IMR-90 (cell line): ENCODE measurements at regions of chr2 and their contacts with region 1.

Region 1: DNA sequence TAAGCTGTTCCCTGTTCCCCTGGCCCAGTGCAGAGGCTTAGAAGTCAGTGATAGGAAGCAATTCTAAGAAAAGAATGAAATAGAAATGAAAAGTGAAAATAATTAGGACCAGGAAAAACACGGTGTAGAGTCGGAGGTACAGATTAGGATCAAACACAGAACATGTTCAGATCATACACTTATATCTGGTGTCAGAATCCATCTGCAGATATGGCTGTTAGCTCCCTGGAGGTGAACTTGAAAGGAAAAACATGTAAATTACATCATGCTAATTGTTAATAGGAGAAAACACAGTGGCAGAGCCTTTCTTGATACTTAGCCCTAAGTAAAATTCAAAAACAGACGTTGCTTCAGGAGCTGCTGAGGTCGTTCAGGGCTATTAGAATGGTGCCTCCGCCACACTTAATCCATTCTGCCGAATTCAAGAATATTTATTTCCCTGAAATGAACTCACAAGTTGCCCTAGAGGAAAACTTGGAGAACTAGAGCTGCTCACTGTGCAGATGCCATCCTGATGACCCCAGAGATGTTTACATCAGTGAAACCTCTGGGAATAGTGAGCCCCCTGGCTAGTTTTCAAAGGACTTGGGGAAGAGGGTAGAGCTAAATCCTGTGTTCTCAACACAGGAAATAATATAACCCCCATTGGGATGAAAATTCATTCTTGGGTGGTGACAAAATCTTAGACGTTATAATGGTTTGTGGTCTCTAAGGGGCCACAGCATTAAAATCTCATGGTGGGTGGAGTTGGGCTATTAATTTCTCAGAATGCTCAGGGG is 27.5 kb downstream of the LPIN1 start:
- DNase-seq: no peak
- ATAC-seq: peak; percentile 31
- H3K4me3 ChIP-seq: no peak overlapping the region
- H3K27ac ChIP-seq: no peak overlapping the region
- H3K4me1 ChIP-seq: peaks cover 7% of the 10 kb centered on the region
- H3K27me3 ChIP-seq: no peaks in the 10 kb centered on the region
- CTCF ChIP-seq: no peak
- POLR2A ChIP-seq: no peak
- RAD21 ChIP-seq: no peak

Region 2: GRCh38 chr2:11539317-11540152 is 234.4 kb before region 1 on chr2:
- CTCF ChIA-PET with region 1: no interaction called
- POLR2A ChIA-PET with region 1: no interaction called
- dilution Hi-C with region 1: no loop called
- in situ Hi-C with region 1: no loop called
- intact Hi-C with region 1: no loop called
- DNase-seq: no peak
- ATAC-seq: no peak
- H3K4me3 ChIP-seq: no peak overlapping the region
- H3K27ac ChIP-seq: no peak overlapping the region
- H3K4me1 ChIP-seq: no peaks in the 10 kb centered on the region
- H3K27me3 ChIP-seq: peaks cover 60% of the 10 kb centered on the region
- CTCF ChIP-seq: no peak
- POLR2A ChIP-seq: no peak
- RAD21 ChIP-seq: no peak

Region 3: DNA sequence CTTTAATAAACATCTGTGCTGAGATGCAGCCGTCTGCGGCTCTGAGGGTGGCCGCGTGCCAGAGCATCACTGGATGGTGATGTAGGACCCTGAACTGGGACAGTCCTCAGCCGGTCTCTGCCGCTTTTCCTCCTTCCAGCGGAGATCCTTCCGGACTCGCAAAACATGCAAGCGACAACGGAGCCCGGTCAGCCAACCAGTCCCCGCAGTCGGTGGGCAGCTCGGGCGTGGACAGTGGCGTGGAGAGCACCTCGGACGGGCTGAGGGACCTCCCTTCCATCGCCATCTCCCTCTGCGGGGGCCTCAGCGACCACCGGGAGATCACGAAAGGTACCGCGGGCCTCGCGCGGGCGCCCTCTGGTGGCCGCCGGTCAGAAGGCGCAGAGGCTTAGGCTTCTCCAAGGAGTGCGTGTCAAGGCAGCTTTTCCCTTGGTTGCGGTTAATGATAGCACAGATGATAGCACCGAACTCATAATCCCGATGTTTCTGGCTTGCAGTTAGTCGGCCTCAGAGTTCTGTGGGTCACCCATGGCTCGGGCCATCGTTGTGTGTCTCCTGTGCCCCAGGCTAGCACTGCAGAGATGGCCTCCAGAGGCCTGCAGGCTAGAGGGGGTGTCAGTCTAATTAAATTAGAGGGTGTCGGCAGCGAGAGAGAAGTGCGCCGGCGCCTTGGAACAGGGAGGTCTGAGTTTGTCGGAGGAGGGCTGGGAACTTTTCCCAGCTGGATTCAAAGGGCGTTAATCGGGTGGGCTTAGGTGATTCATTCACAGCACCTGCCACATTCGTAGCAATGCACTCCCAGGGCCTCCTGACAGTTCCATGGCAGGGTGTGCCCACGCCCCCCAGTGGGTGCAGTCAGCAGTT is 11.0 kb after region 1 on chr2:
- CTCF ChIA-PET with region 1: interaction called, 7 read pairs
- POLR2A ChIA-PET with region 1: interaction called, 15 read pairs
- dilution Hi-C with region 1: no loop called
- in situ Hi-C with region 1: no loop called
- intact Hi-C with region 1: no loop called
- DNase-seq: peak; percentile 63
- ATAC-seq: peak; percentile 91
- H3K4me3 ChIP-seq: peak overlapping the region; percentile 43
- H3K27ac ChIP-seq: no peak overlapping the region
- H3K4me1 ChIP-seq: no peaks in the 10 kb centered on the region
- H3K27me3 ChIP-seq: no peaks in the 10 kb centered on the region
- CTCF ChIP-seq: peak; percentile 71
- POLR2A ChIP-seq: no peak
- RAD21 ChIP-seq: peak; percentile 43; the same call in 1 of the 2 replicates

Region 4: GRCh38 chr2:11891028-11891427 is 117.1 kb after region 1 on chr2:
- CTCF ChIA-PET with region 1: no interaction called
- POLR2A ChIA-PET with region 1: no interaction called
- dilution Hi-C with region 1: no loop called
- in situ Hi-C with region 1: no loop called
- intact Hi-C with region 1: no loop called
- DNase-seq: no peak
- ATAC-seq: no peak
- H3K4me3 ChIP-seq: no peak overlapping the region
- H3K27ac ChIP-seq: no peak overlapping the region
- H3K4me1 ChIP-seq: no peaks in the 10 kb centered on the region
- H3K27me3 ChIP-seq: no peaks in the 10 kb centered on the region
- CTCF ChIP-seq: no peak
- POLR2A ChIP-seq: no peak
- RAD21 ChIP-seq: no peak